MCF 10A (cell line): ENCODE measurements at regions of chr5 and their contacts with region 1.

Region 1: GRCh38 chr5:5398046-5398445 is 24.4 kb upstream of the ICE1 start:
- DNase-seq: peak; percentile 23
- H3K4me3 Mint-ChIP-seq: no peak overlapping the region
- H3K27ac Mint-ChIP-seq: no peak overlapping the region
- H3K4me1 Mint-ChIP-seq: peaks cover 7% of the 10 kb centered on the region
- H3K27me3 Mint-ChIP-seq: no peaks in the 10 kb centered on the region
- CTCF ChIP-seq: no peak

Region 2: GRCh38 chr5:5141625-5142532 is 256.2 kb before region 1 on chr5:
- CTCF ChIA-PET with region 1: interaction called, 39 read pairs
- POLR2A ChIA-PET with region 1: no interaction called
- intact Hi-C with region 1: loop called (anchors 1 kb)
- DNase-seq: peak; percentile 74
- H3K4me3 Mint-ChIP-seq: no peak overlapping the region
- H3K27ac Mint-ChIP-seq: no peak overlapping the region
- H3K4me1 Mint-ChIP-seq: no peaks in the 10 kb centered on the region
- H3K27me3 Mint-ChIP-seq: peaks cover 16% of the 10 kb centered on the region
- CTCF ChIP-seq: peak; percentile 78

Region 3: DNA sequence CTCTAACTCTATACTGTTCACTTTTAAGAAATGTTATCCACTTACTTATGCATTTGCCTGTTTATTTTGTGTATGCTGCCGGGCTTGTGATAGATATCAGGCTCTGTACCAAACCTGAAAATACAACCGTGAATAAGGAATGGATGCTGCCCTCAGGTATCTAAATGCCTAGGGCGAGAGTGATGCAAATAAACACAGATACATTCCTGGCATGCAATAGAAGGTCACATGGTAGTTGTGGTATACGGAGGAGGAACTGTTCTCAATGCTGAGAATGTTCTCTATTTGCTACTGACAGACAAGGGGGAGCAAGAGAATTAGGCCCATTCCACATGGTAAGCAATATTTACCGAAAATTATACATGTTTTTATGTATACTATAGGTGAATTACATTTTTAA is 252.2 kb after region 1 on chr5:
- CTCF ChIA-PET with region 1: no interaction called
- POLR2A ChIA-PET with region 1: no interaction called
- intact Hi-C with region 1: no loop called
- DNase-seq: no peak
- H3K4me3 Mint-ChIP-seq: no peak overlapping the region
- H3K27ac Mint-ChIP-seq: peak overlapping the region; percentile 63
- H3K4me1 Mint-ChIP-seq: peaks cover 11% of the 10 kb centered on the region
- H3K27me3 Mint-ChIP-seq: no peaks in the 10 kb centered on the region
- CTCF ChIP-seq: no peak

Region 4: GRCh38 chr5:6188344-6188743 is 790.3 kb after region 1 on chr5:
- CTCF ChIA-PET with region 1: no interaction called
- POLR2A ChIA-PET with region 1: no interaction called
- intact Hi-C with region 1: no loop called
- DNase-seq: no peak
- H3K4me3 Mint-ChIP-seq: no peak overlapping the region
- H3K27ac Mint-ChIP-seq: no peak overlapping the region
- H3K4me1 Mint-ChIP-seq: no peaks in the 10 kb centered on the region
- H3K27me3 Mint-ChIP-seq: peaks cover 44% of the 10 kb centered on the region
- CTCF ChIP-seq: no peak